Heart right ventricle (tissue), 16 donors: ENCODE measurements at regions of chr9 and their contacts with region 1.

Region 1: GRCh38 chr9:110452227-110452801 is 114.7 kb upstream of the TXNDC8 start:
- DNase-seq: no peak
- ATAC-seq: no peak
- H3K4me3 ChIP-seq: no peak overlapping the region
- H3K27ac ChIP-seq: no peak overlapping the region
- H3K4me1 ChIP-seq: no peaks in the 10 kb centered on the region
- H3K27me3 ChIP-seq: no peaks in the 10 kb centered on the region
- CTCF ChIP-seq: peak in 7 of 9 donors; percentile 36 to 65 (median 47)

Region 2: DNA sequence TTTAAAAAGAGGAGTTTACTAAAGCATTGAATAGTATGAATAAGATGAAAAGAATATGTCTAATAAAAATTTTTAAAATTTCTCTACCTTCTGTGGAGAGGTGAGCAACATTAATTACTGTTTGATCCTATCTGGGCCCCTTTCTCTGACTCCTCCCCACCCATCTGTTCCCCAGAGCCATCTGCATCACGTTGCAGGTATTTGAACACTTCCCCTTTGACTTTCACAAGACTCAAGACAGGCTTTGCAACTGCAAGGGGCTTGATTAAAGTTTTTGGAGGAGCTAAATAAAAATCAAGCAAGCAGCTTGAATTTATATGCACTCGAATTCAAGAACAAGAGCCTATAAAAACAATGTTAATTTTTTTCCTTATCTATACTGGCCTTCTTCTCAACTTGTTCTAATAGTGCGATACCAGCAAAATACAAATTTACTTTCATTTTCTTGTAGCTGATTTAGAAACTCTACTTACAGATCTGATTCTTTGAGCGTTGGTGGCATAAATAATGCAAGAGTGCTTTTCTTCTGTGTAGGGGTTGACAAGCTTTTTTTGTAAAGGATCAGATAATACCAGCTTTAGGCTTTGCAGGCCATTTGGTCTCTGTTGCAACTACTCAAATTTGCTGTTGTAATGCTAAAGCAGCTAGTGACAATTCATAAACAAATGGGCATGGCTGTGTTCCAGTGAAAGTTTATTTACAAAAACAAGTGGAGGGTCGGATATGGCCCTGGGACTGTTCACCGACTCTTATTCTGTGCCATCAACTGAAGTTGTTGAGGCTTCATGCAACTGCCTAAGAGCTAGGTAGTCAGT is 135.8 kb before region 1 on chr9:
- intact Hi-C with region 1: no loop called
- DNase-seq: no peak
- ATAC-seq: no peak
- H3K4me3 ChIP-seq: peak overlapping the region in 5 of 10 donors; percentile 0 to 30 (median 21)
- H3K27ac ChIP-seq: peak overlapping the region in 1 of 10 donors; percentile 59
- H3K4me1 ChIP-seq: peaks cover 0 to 11% (median 0%) of the 10 kb centered on the region in 9 donors
- H3K27me3 ChIP-seq: peaks cover 0 to 4% (median 0%) of the 10 kb centered on the region in 7 donors
- CTCF ChIP-seq: no peak

Region 3: GRCh38 chr9:110579862-110580219 is 127.5 kb after region 1 on chr9:
- intact Hi-C with region 1: loop called in 2 of 10 experiments (anchors 5 to 10 kb)
- DNase-seq: peak; percentile 12 to 27
- ATAC-seq: peak in 5 of 8 donors; percentile 15 to 32 (median 18)
- H3K4me3 ChIP-seq: peak overlapping the region; percentile 33 to 64 (median 58)
- H3K27ac ChIP-seq: peak overlapping the region; percentile 20 to 89 (median 80)
- H3K4me1 ChIP-seq: peaks cover 0 to 18% (median 6%) of the 10 kb centered on the region in 9 donors
- H3K27me3 ChIP-seq: peaks cover 0 to 70% (median 41%) of the 10 kb centered on the region in 7 donors
- CTCF ChIP-seq: no peak

Region 4: GRCh38 chr9:110615498-110615897 is 163.2 kb after region 1 on chr9:
- intact Hi-C with region 1: loop called in 6 of 10 experiments (anchors 5 to 10 kb)
- DNase-seq: no peak
- ATAC-seq: no peak
- H3K4me3 ChIP-seq: no peak overlapping the region
- H3K27ac ChIP-seq: no peak overlapping the region
- H3K4me1 ChIP-seq: no peaks in the 10 kb centered on the region
- H3K27me3 ChIP-seq: no peaks in the 10 kb centered on the region
- CTCF ChIP-seq: no peak

Region 5: GRCh38 chr9:110623462-110624025 is 171.2 kb after region 1 on chr9:
- intact Hi-C with region 1: loop called in 7 of 10 experiments (anchors 1 to 10 kb)
- DNase-seq: peak in 1 of 2 donors; percentile 51
- ATAC-seq: peak in 2 of 8 donors; percentile 21 to 47
- H3K4me3 ChIP-seq: no peak overlapping the region
- H3K27ac ChIP-seq: no peak overlapping the region
- H3K4me1 ChIP-seq: no peaks in the 10 kb centered on the region
- H3K27me3 ChIP-seq: no peaks in the 10 kb centered on the region
- CTCF ChIP-seq: peak; percentile 44 to 78 (median 69)